ENCODE measurements at regions of chr2 and their contacts with region 1.

Region 1: GRCh38 chr2:98438190-98439133 is 6.2 kb upstream of the INPP4A start:
- DNase-seq: no peak
- H3K4me3 Mint-ChIP-seq: peak overlapping the region; percentile 65
- H3K27ac Mint-ChIP-seq: peak overlapping the region; percentile 93
- H3K4me1 Mint-ChIP-seq: peaks cover 45% of the 10 kb centered on the region
- H3K27me3 Mint-ChIP-seq: no peaks in the 10 kb centered on the region

Region 2: GRCh38 chr2:98012561-98012991 is 425.9 kb before region 1 on chr2:
- intact Hi-C with region 1: loop called (anchors 5 kb)
- DNase-seq: no peak
- H3K4me3 Mint-ChIP-seq: no peak overlapping the region
- H3K27ac Mint-ChIP-seq: peak overlapping the region; percentile 78
- H3K4me1 Mint-ChIP-seq: peaks cover 34% of the 10 kb centered on the region
- H3K27me3 Mint-ChIP-seq: no peaks in the 10 kb centered on the region

Region 3: DNA sequence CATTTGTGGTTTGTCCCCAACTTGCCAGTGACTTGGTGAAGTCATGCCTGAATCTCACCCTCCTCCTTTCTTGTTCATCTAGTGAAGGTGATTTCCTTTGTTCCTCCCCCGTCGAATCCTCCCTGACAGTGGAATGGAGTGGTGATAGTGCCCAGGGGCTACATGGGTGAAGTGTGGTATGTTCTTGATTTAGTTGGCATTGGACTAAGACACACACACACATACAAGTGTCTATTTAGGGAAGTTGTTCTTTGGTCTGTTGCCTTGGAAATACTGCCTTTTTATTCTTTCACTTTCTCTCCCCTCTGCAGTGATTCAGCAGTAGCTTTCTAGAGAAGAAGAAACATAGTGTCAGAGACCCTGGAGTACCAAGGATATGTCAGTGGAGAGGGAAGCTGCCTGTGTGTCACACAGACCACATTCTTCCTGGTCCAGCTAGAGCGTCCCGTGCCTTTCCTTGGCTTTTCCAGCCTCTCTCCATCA is 17.1 kb after region 1 on chr2:
- intact Hi-C with region 1: loop called (anchors 1 kb)
- DNase-seq: no peak
- H3K4me3 Mint-ChIP-seq: peak overlapping the region; percentile 68
- H3K27ac Mint-ChIP-seq: peak overlapping the region; percentile 98
- H3K4me1 Mint-ChIP-seq: peaks cover 97% of the 10 kb centered on the region
- H3K27me3 Mint-ChIP-seq: no peaks in the 10 kb centered on the region

Region 4: GRCh38 chr2:98483257-98483861 is 44.9 kb after region 1 on chr2:
- intact Hi-C with region 1: loop called (anchors 1 kb)
- DNase-seq: no peak
- H3K4me3 Mint-ChIP-seq: peak overlapping the region; percentile 68
- H3K27ac Mint-ChIP-seq: peak overlapping the region; percentile 87
- H3K4me1 Mint-ChIP-seq: peaks cover 99% of the 10 kb centered on the region
- H3K27me3 Mint-ChIP-seq: no peaks in the 10 kb centered on the region

Region 5: DNA sequence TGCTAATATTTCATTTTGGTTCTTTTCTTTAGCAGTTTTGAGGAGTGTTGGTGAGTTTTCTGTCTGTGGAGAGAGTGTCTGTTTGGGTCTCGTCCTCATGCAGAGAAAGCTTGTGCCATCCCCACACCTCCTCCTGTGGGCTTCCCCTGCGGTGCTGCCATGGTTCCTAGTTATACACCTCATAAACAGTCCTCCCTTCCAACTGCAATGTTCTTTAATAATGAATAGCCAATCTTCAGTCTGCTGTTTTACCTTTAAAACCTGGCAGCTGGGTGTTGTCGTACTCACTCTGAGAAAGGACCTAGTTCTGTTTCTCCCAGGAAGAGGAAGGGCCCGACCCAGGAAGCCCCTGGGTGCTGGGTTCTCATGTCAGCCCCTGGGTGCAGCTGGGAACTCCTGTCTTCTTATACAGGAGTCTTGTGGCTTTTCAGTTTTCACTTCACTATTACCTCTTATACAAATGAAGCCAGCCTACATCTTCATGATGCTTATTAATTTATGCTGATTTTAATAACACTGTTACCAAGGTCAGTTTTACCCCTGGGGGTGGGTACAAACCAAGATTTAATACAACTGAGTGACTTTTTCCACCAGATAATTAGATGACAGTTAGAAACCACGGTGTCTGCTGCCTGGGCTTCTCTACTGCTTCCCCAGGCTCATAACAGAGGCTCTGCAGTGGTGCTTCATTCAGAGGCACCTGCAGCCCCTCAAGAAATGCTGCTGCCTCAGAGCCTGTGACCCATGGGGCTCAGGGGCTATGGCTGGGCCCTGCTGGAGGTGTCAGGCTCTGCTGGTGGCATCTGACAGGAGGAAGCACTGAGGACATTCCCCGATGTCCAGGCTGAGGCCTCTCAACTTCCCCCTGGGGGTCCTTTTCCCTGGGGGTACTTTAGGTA is 110.7 kb after region 1 on chr2:
- intact Hi-C with region 1: loop called (anchors 2 kb)
- DNase-seq: no peak
- H3K4me3 Mint-ChIP-seq: peak overlapping the region; percentile 9
- H3K27ac Mint-ChIP-seq: peak overlapping the region; percentile 35
- H3K4me1 Mint-ChIP-seq: peaks cover 72% of the 10 kb centered on the region
- H3K27me3 Mint-ChIP-seq: no peaks in the 10 kb centered on the region

Region 6: GRCh38 chr2:98634401-98635092 is 196.1 kb after region 1 on chr2:
- intact Hi-C with region 1: no loop called
- DNase-seq: peak; percentile 26
- H3K4me3 Mint-ChIP-seq: peak overlapping the region; percentile 30
- H3K27ac Mint-ChIP-seq: peak overlapping the region; percentile 70
- H3K4me1 Mint-ChIP-seq: peaks cover 40% of the 10 kb centered on the region
- H3K27me3 Mint-ChIP-seq: no peaks in the 10 kb centered on the region

Region 7: GRCh38 chr2:98771721-98772524 is 333.5 kb after region 1 on chr2:
- intact Hi-C with region 1: loop called (anchors 5 kb)
- DNase-seq: peak; percentile 63
- H3K4me3 Mint-ChIP-seq: peak overlapping the region; percentile 92
- H3K27ac Mint-ChIP-seq: peak overlapping the region; percentile 99
- H3K4me1 Mint-ChIP-seq: peaks cover 64% of the 10 kb centered on the region
- H3K27me3 Mint-ChIP-seq: peaks cover 2% of the 10 kb centered on the region

Region 8: DNA sequence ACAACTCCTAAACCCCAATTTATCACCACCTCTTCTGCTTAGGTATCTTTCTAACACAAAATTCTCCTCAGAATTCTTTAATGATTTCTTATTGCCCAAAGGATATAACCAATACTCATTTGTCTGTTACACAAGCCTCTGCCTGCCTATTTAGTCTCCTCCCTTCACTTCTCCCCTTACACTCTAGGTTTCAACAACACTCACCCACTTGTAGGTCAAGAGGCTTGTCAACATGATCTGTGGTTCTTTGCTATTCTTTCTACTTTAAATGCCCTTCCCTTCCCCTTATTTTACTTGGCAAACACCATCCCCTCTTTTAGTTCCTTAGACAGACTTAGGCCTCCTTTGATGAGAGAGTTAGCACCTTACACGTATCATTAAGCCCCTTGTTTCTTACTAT is 634.1 kb after region 1 on chr2:
- intact Hi-C with region 1: no loop called
- DNase-seq: no peak
- H3K4me3 Mint-ChIP-seq: no peak overlapping the region
- H3K27ac Mint-ChIP-seq: no peak overlapping the region
- H3K4me1 Mint-ChIP-seq: no peaks in the 10 kb centered on the region
- H3K27me3 Mint-ChIP-seq: peaks cover 2% of the 10 kb centered on the region

Measured in activated T-helper 1 cell treated with anti-CD3 and anti-CD28 coated beads, Interleukin-12 subunit alpha, Interleukin-12 subunit beta, Interleukin-2, Interleukin-4 antibody, amounts not matched to agents 30 ng/mL and 10 ng/mL and 1 ng/mL, durations not matched to agents 14 hours and 24 hours and 36 hours (primary cell).